Sigmoid colon (tissue), 7 donors: ENCODE measurements at regions of chr9 and their contacts with region 1.

Region 1: DNA sequence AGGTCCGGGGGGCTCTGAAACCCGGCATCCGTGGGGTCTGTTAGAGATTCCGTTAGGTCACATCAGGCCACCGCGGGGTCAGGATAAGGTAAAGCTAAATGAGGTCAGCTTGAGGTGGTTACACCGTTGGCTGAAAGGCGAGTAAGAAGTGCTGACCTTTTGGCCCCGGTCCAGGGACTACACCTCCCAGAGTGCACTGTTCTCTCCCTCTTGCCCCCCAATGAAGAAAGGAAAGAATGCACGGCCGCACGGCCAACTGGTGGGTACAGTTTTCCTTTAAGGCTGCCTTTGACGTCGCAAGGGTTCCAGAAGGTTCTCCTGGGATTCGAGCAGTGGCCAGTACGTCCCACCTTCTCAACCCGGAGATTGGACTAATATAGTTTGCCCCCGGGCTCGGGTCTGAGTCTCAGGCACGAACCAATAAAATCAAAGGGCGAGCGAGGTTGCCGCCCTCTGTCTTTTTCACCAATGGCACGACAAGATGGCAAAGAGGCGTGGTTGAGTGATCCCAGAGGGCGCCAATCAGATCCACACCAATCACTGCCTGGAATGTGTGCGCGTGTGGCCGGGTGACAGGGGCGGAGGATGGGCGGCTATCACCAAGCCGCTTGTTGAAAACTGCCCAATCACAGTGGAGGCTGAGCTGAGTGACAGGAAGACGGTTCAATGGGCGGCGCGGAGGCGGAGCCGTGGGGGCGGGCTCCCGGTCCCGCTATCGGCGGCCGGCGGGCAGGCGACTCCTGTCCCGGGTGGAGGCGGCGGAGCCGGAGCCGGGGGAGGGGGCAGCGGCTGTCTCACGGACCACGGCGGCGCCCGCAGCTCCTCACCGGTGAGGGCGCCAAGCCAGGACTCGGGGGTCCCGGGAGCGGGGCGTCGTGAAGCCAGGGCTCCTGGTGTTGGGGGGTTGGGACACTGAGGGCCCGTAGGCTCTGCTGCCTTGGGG is at the start of gene DNAJB5:
- DNase-seq: peak; percentile 100
- H3K4me3 ChIP-seq: peak within 1 kb of the TSS; percentile 67 to 97 (median 92)
- H3K27ac ChIP-seq: peak within 1 kb of the TSS in 3 of 4 donors; percentile 95 to 100 (median 98)
- H3K4me1 ChIP-seq: peaks cover 0 to 53% (median 48%) of the 10 kb centered on the region in 4 donors
- H3K27me3 ChIP-seq: no peaks in the 10 kb centered on the region
- CTCF ChIP-seq: no peak
- EP300 ChIP-seq: peak in 2 of 4 donors; percentile 58 to 66
- POLR2A ChIP-seq: peak; percentile 68 to 94
- total RNA-seq, gene DNAJB5: 27.8 to 58.7 (median 56.2) TPM

Region 2: DNA sequence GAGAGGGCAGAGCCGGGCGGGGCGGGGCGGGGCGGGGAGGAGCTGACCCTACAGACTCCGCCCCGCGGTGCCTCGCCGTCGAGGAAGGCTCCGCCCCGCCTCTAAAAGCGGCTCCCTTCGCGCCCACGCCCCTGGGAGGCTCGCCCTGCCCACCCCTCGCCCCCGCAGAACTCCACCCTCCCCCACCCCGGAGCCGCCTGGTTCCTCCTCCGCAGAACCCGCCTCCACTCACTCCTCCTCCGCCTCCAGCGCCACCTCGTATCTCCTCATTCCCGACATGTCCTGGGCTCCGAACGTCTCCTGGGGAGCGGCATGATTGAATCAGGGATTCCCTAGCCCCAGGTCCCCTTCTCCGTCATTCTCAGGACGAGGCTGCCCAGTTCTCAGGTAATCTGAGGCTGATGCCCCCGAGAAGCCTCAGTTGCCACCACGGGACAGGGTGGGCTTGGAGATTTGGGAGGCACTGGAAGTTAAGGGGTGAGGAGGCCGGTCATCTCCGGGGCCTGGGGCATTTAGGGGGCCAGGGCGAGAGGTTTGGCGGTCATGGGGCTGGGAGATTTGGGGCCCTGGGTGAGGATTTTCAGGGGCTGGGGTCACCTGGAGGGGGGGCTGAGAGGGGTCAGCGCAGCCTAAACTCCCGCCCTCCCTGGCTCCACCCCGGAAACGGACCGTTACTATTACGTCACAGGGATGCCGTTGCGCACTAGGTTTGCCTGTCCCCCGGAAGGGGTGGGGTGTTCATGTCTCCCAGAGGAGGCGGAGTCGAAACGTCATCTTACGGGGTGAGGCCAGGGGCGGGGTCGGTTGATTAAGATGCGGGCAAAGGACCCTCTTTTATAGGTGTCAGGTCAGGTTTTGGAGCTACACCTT is 323.7 kb before region 1 on chr9:
- intact Hi-C with region 1: loop called (anchors 2 kb)
- DNase-seq: peak; percentile 99
- H3K4me3 ChIP-seq: peak overlapping the region; percentile 72 to 81 (median 78)
- H3K27ac ChIP-seq: peak overlapping the region; percentile 96 to 100 (median 100)
- H3K4me1 ChIP-seq: peaks cover 0 to 25% (median 19%) of the 10 kb centered on the region in 4 donors
- H3K27me3 ChIP-seq: no peaks in the 10 kb centered on the region
- CTCF ChIP-seq: no peak
- EP300 ChIP-seq: peak in 2 of 4 donors; percentile 10 to 48
- POLR2A ChIP-seq: peak; percentile 92 to 94

Region 3: GRCh38 chr9:34701769-34702736 is 287.2 kb before region 1 on chr9:
- intact Hi-C with region 1: loop called (anchors 5 kb)
- DNase-seq: peak; percentile 93
- H3K4me3 ChIP-seq: peak overlapping the region; percentile 56 to 72 (median 62)
- H3K27ac ChIP-seq: peak overlapping the region; percentile 78 to 86 (median 80)
- H3K4me1 ChIP-seq: peaks cover 0 to 11% (median 5%) of the 10 kb centered on the region in 4 donors
- H3K27me3 ChIP-seq: no peaks in the 10 kb centered on the region
- CTCF ChIP-seq: peak; percentile 90 to 98 (median 95)
- EP300 ChIP-seq: no peak
- POLR2A ChIP-seq: no peak

Region 4: DNA sequence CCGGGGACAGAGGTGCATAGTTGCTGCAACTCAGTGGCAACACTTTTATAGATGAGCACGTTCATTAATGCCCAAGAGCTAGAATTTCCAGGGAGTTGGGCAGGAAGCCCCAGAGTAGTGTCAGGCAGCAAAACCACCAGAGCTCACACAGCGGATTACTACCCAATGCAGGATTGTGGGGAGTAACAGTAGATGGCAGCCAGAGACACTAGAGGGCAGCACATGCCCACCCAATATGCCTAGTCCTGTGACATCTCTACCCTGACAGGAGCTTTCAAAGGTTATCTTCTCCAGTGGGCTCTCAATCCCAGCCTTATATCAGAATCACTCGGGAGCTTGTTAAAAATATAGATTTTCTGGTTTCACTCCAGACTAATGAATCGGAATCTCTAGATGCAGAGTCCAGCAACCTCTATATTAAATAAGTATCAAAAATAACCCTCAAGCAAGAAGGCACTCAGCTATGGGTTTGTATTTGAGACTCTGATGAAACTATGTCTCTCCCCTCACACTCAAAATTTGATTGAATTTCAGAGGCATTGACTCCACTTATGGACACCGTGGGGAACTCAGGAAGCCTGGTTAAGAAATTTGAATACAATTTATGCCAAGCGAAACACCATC is 89.6 kb before region 1 on chr9:
- intact Hi-C with region 1: loop called (anchors 1 kb)
- DNase-seq: peak; percentile 84
- H3K4me3 ChIP-seq: no peak overlapping the region
- H3K27ac ChIP-seq: no peak overlapping the region
- H3K4me1 ChIP-seq: no peaks in the 10 kb centered on the region
- H3K27me3 ChIP-seq: peaks cover 0 to 14% (median 0%) of the 10 kb centered on the region in 3 donors
- CTCF ChIP-seq: peak; percentile 66 to 80 (median 78)
- EP300 ChIP-seq: no peak
- POLR2A ChIP-seq: no peak

Region 5: DNA sequence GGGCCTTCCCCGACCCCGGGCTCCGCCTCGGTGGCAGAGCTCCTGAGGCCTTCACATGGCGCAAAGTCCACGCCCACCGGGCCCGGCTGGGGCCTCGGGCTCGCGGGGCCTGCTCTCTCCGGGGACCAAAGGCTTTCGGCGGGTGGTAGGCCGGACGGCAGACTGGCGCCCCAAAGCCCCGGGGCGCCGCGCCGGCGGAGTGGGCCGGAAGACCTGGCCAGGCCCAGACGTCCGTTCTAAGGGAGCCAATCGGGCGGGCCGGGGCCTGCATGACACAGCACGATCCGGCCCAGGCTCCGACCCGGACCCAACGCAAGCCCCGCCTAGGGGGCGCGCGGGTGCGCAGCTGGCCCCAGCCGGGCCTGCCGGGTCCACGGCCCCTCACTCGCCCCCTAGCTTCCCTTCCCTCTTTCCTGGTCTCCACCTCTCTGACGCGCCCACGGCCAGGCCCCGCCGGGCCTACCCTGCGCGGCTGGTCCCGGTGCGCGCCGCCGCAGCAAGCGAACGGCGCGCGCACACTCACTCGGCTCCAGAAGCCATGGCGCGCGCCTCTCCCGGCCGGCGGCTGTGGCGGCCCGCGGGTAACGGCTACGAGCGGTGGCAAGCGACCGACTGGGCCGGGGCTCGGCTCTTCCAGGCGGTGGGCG is 82.7 kb after region 1 on chr9:
- intact Hi-C with region 1: loop called (anchors 5 kb)
- DNase-seq: peak; percentile 94
- H3K4me3 ChIP-seq: peak overlapping the region; percentile 80 to 100 (median 90)
- H3K27ac ChIP-seq: peak overlapping the region; percentile 99 to 100 (median 100)
- H3K4me1 ChIP-seq: peaks cover 0 to 47% (median 33%) of the 10 kb centered on the region in 4 donors
- H3K27me3 ChIP-seq: no peaks in the 10 kb centered on the region
- CTCF ChIP-seq: no peak
- EP300 ChIP-seq: no peak
- POLR2A ChIP-seq: peak in 1 of 2 donors; percentile 11

Region 6: GRCh38 chr9:35096035-35096849 is 107.0 kb after region 1 on chr9 and contains the start of gene PIGO:
- intact Hi-C with region 1: loop called (anchors 5 kb)
- DNase-seq: peak; percentile 94
- H3K4me3 ChIP-seq: peak within 1 kb of the TSS; percentile 77 to 95 (median 80)
- H3K27ac ChIP-seq: peak within 1 kb of the TSS; percentile 91 to 96 (median 92)
- H3K4me1 ChIP-seq: peaks cover 0 to 16% (median 13%) of the 10 kb centered on the region in 4 donors
- H3K27me3 ChIP-seq: no peaks in the 10 kb centered on the region
- CTCF ChIP-seq: peak; percentile 62 to 88 (median 66)
- EP300 ChIP-seq: no peak
- POLR2A ChIP-seq: peak in 1 of 2 donors; percentile 34
- total RNA-seq, gene PIGO: 5.9 to 13.6 (median 9.1) TPM